ENCODE measurements at regions of chr1 and their contacts with region 1.

Region 1: DNA sequence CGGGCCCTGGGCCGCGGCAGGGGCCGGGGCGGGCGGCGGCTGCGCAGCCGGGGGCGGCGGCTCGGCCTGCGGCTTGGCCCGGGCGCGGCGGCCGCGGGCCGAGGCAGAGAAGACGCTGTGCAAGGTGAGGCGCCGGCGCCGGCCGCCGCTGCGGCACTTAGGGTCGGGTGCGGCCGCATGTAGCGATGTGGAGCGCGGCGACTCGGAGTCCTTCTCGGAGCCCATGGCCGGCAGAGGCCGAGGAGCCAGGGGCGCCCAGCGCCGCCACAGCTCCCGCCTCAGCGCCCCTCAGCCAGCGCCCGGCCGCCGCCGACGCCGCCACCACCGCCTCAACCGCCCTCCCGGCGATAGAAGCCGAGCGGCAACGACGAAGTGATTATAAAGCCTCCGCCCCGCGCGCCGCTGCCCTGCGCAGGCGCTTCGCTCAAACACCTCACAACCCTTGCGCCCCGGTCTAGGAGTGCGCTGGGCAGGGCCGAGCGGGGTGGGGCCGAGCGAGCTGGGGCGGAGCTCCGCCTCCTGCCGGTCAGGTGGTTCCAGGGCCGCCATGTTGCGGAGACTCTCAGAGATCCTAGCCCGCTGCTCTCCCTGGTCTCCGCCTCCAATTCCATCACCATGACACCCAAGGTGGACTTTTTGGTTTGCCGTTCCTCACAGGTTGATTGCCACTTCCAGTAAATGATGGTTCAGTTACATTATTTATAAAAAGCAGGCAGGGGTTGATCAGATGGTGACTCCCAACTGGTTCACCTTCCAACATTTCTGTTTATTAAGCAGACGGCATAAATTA is at the start of gene RNF19B:
- DNase-seq: peak; percentile 95
- H3K4me3 ChIP-seq: peak within 1 kb of the TSS; percentile 76 to 98 (median 78)
- H3K27ac ChIP-seq: peak within 1 kb of the TSS; percentile 36
- H3K4me1 ChIP-seq: peaks cover 20% of the 10 kb centered on the region
- H3K27me3 ChIP-seq: no peaks in the 10 kb centered on the region
- CTCF ChIP-seq: no peak
- POLR2A ChIP-seq: peak; percentile 99
- total RNA-seq, gene RNF19B: 24.2 and 25.6 TPM in 2 replicates

Region 2: DNA sequence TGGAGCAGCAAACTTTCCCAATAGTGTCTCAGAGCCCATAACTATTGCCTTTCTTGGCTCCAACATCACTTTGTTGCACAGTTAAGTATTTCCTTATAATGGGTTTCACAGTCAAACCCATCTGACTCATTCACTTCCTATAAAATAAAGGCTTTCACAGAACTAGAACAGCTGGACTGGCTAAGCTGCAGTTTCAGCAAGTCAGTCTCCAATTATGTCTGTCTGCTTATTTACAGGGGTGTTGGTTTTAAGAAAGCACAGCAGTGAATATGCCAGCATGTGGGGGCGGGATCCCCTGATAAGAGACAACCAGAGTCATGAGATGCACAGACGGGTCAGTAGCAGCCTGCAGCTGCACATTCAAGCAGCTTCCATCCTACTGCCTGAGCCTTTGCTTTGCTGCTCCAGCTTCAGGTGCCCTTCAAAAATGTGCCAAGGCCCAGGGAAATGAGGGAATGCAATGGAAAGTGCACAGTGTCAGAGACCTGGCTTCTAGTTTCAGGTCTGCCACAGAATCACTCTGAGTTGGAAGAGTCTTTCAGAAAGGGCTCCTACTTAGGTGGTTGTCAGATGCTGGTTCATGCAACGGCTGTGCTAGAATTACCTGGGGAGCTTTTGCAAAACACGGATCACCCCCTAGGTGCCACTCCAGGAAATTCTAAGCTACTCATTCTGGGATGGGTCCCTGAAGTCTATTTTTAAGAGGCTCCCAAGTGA is 24.8 kb before region 1 on chr1:
- CTCF ChIA-PET with region 1: interaction called, 21 read pairs
- POLR2A ChIA-PET with region 1: interaction called, 6 read pairs
- dilution Hi-C with region 1: no loop called
- intact Hi-C with region 1: loop called (anchors 1 kb)
- DNase-seq: peak; percentile 87
- H3K4me3 ChIP-seq: no peak overlapping the region
- H3K27ac ChIP-seq: peak overlapping the region; percentile 6
- H3K4me1 ChIP-seq: peaks cover 40% of the 10 kb centered on the region
- H3K27me3 ChIP-seq: no peaks in the 10 kb centered on the region
- CTCF ChIP-seq: no peak
- POLR2A ChIP-seq: no peak

Region 3: DNA sequence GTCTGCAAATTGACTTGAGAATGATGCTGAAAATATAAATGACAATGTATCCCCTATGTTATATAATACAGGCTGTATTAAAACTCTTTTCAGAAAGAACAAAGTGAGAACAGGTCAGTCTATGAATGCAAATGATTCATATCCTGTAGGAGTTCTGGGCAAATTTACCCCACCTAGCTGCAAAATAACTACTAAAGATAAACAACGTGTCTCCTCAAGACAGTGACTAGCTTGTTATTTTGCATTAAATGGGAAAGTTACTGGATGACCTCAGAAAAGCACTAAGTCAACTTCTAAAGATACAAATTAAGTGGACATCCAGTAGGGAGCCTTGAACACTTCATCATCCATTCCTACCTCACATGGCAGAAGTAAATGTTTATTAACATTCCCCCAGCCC is 11.2 kb before region 1 on chr1:
- CTCF ChIA-PET with region 1: interaction called, 6 read pairs
- POLR2A ChIA-PET with region 1: interaction called, 16 read pairs
- dilution Hi-C with region 1: no loop called
- intact Hi-C with region 1: loop called (anchors 1 kb)
- DNase-seq: peak; percentile 91
- H3K4me3 ChIP-seq: no peak overlapping the region
- H3K27ac ChIP-seq: peak overlapping the region; percentile 45
- H3K4me1 ChIP-seq: peaks cover 20% of the 10 kb centered on the region
- H3K27me3 ChIP-seq: no peaks in the 10 kb centered on the region
- CTCF ChIP-seq: no peak
- POLR2A ChIP-seq: no peak

Region 4: DNA sequence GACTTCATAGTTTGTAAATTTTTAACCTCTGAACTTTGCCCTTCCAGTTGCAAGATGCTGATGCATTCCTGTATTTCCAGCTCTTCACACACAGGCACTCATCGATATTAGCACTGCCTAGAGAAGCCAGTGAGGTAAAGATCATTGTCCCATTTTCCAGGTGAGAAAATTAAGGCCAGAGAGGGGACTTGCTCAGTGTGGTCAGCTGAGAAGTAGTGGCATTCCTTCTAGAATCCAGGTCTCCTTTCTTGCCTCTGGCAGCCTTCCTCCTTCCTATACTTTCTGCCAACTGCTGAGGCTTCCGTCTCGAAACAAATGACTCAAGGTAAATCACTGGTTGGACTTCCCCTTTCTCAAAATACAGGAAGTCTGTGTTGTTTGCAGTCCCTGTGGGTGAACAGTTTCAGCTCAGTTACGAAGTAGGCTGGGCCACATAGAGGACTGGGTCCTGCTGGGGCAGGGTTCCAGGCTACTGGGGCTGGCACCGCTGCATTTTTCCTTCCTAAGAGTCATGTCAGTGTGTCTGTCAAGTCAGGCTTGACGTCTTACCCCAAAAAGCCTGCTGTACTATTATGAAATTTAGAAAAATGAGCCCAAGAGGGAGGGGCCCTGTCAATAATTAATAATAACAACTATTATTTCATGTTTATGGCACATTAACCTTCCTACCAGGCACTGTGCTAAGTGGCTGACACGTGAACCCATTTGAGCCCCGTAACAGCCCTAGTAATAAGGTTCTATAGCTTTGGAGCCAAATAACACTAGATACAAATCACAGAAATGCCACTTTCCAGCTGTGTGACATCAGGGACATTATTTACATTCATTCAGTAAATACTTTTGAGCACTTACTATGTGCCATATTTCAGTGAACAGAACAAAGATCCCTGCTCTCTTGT is 16.6 kb after region 1 on chr1:
- CTCF ChIA-PET with region 1: interaction called, 4 read pairs
- POLR2A ChIA-PET with region 1: interaction called, 13 read pairs
- dilution Hi-C with region 1: no loop called
- intact Hi-C with region 1: loop called (anchors 1 kb)
- DNase-seq: peak; percentile 96
- H3K4me3 ChIP-seq: no peak overlapping the region
- H3K27ac ChIP-seq: peak overlapping the region; percentile 88
- H3K4me1 ChIP-seq: peaks cover 27% of the 10 kb centered on the region
- H3K27me3 ChIP-seq: no peaks in the 10 kb centered on the region
- CTCF ChIP-seq: no peak
- POLR2A ChIP-seq: no peak

Region 5: DNA sequence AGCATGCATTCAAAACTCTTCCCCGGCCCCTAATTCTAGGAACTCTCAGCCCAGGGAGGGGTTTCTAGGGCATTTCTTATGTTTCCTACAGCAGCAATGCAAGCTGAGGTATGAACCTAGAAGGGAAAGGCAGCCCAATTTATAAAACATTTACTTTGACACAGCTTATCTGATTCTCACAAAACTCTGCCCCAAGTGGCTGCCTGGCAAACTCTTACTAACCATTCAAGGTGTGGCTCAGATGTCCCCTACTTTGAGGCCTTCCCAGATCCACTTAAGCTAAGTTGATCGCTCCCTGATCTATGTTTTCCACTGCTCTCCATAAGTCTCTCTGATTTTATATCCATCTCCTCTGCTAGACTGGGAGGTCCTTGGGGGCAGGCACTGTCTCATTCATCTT is 36.6 kb after region 1 on chr1:
- CTCF ChIA-PET with region 1: interaction called, 43 read pairs
- POLR2A ChIA-PET with region 1: interaction called, 15 read pairs
- dilution Hi-C with region 1: no loop called
- intact Hi-C with region 1: loop called (anchors 1 kb)
- DNase-seq: no peak
- H3K4me3 ChIP-seq: no peak overlapping the region
- H3K27ac ChIP-seq: no peak overlapping the region
- H3K4me1 ChIP-seq: peaks cover 69% of the 10 kb centered on the region
- H3K27me3 ChIP-seq: no peaks in the 10 kb centered on the region
- CTCF ChIP-seq: peak in 1 of 2 donors; percentile 19
- POLR2A ChIP-seq: no peak

Region 6: DNA sequence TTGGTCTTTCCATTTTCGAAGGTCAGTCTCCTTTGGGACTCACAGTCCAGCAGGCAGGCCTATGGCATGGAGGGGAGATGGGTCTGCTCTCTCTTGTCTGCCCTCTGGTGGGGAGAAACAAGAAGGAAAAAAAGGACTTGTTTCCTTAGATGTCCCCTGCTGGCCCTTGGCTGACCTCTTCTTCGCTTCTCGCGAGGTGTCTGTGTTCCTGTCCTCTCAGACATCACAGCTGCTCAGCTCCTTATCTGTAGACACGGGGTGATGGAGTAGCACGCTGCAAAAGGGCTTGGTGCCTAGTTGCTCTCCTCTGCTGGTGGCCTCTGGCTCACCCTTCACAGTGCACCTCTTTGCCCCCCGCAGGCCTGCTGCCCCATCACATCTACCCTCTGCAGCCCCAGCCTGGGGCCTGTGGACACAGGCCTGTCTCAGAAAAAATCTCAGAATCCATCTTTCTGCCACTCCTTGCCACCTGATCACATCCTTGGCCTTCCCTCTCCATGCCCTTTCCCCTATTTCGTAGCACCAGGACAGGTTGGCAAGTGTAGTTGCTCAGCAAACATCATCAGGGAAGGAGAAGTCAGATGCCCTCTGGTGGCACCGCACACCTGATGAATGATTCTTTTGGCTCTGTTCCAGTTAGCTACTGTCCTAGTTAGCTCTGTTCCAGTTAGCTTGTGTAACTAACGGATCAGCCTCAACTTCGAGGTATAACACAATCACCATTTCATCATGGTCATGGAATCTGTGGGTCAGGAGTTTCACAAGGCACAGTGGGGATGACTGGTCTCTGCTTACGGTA is 90.8 kb after region 1 on chr1:
- CTCF ChIA-PET with region 1: interaction called, 3 read pairs
- POLR2A ChIA-PET with region 1: no interaction called
- dilution Hi-C with region 1: no loop called
- intact Hi-C with region 1: loop called (anchors 1 kb)
- DNase-seq: peak; percentile 86
- H3K4me3 ChIP-seq: no peak overlapping the region
- H3K27ac ChIP-seq: no peak overlapping the region
- H3K4me1 ChIP-seq: peaks cover 2% of the 10 kb centered on the region
- H3K27me3 ChIP-seq: no peaks in the 10 kb centered on the region
- CTCF ChIP-seq: peak; percentile 65 to 78
- POLR2A ChIP-seq: no peak